Activated naive CD4-positive, alpha-beta T cell treated with anti-CD3 and anti-CD28 coated beads for 36 hours (primary cell): ENCODE measurements at regions of chr4 and their contacts with region 1.

Region 1: GRCh38 chr4:74632634-74633033 is 161.7 kb downstream of the BTC start:
- DNase-seq: peak; percentile 69
- H3K4me3 Mint-ChIP-seq: no peak overlapping the region
- H3K27ac Mint-ChIP-seq: no peak overlapping the region
- H3K4me1 Mint-ChIP-seq: peaks cover 25% of the 10 kb centered on the region
- H3K27me3 Mint-ChIP-seq: no peaks in the 10 kb centered on the region

Region 2: GRCh38 chr4:74659576-74660411 is 27.2 kb after region 1 on chr4:
- CTCF ChIA-PET with region 1: no interaction called
- intact Hi-C with region 1: loop called (anchors 2 kb)
- DNase-seq: no peak
- H3K4me3 Mint-ChIP-seq: no peak overlapping the region
- H3K27ac Mint-ChIP-seq: no peak overlapping the region
- H3K4me1 Mint-ChIP-seq: peaks cover 12% of the 10 kb centered on the region
- H3K27me3 Mint-ChIP-seq: peaks cover 3% of the 10 kb centered on the region

Region 3: GRCh38 chr4:74715706-74716435 is 83.2 kb after region 1 on chr4:
- CTCF ChIA-PET with region 1: no interaction called
- intact Hi-C with region 1: no loop called
- DNase-seq: no peak
- H3K4me3 Mint-ChIP-seq: no peak overlapping the region
- H3K27ac Mint-ChIP-seq: no peak overlapping the region
- H3K4me1 Mint-ChIP-seq: no peaks in the 10 kb centered on the region
- H3K27me3 Mint-ChIP-seq: peaks cover 9% of the 10 kb centered on the region